Activated T-helper 2 cell treated with anti-CD3 and anti-CD28 coated beads, Interferon-gamma antibody, Interleukin-2, Interleukin-4, amounts not matched to agents 10 μg/mL and 5 μg/mL and 100 μg/mL, durations not matched to agents 14 hours and 24 hours and 36 hours (primary cell): ENCODE measurements at regions of chr4 and their contacts with region 1.

Region 1: GRCh38 chr4:1870578-1871443 is at the start of gene NSD2:
- DNase-seq: peak; percentile 86
- H3K4me3 Mint-ChIP-seq: peak within 1 kb of the TSS; percentile 99
- H3K27ac Mint-ChIP-seq: peak within 1 kb of the TSS; percentile 97
- H3K4me1 Mint-ChIP-seq: peaks cover 29% of the 10 kb centered on the region
- H3K27me3 Mint-ChIP-seq: no peaks in the 10 kb centered on the region
- total RNA-seq, gene NSD2: 208 and 214 TPM in 2 replicates

Region 2: GRCh38 chr4:1721004-1721665 is 149.7 kb before region 1 on chr4 and contains the starts of genes TACC3 and TMEM129:
- intact Hi-C with region 1: loop called (anchors 2 kb)
- DNase-seq: peak; percentile 92
- H3K4me3 Mint-ChIP-seq: peak within 1 kb of the TSS; percentile 97
- H3K27ac Mint-ChIP-seq: peak within 1 kb of the TSS; percentile 99
- H3K4me1 Mint-ChIP-seq: peaks cover 36% of the 10 kb centered on the region
- H3K27me3 Mint-ChIP-seq: no peaks in the 10 kb centered on the region
- total RNA-seq, gene TACC3: 137 and 141 TPM in 2 replicates
- total RNA-seq, gene TMEM129: 23.5 and 27.1 TPM in 2 replicates

Region 3: GRCh38 chr4:1856042-1856788 is 14.6 kb before region 1 on chr4 and contains the start of gene LETM1:
- intact Hi-C with region 1: loop called (anchors 1 kb)
- DNase-seq: peak; percentile 93
- H3K4me3 Mint-ChIP-seq: peak within 1 kb of the TSS; percentile 86
- H3K27ac Mint-ChIP-seq: peak within 1 kb of the TSS; percentile 70
- H3K4me1 Mint-ChIP-seq: peaks cover 32% of the 10 kb centered on the region
- H3K27me3 Mint-ChIP-seq: no peaks in the 10 kb centered on the region
- total RNA-seq, gene LETM1: 76.6 and 78.6 TPM in 2 replicates

Region 4: GRCh38 chr4:1899149-1900086 is 28.6 kb after region 1 on chr4:
- intact Hi-C with region 1: loop called (anchors 1 kb)
- DNase-seq: peak; percentile 65
- H3K4me3 Mint-ChIP-seq: peak overlapping the region; percentile 44
- H3K27ac Mint-ChIP-seq: peak overlapping the region; percentile 89
- H3K4me1 Mint-ChIP-seq: peaks cover 44% of the 10 kb centered on the region
- H3K27me3 Mint-ChIP-seq: no peaks in the 10 kb centered on the region

Region 5: DNA sequence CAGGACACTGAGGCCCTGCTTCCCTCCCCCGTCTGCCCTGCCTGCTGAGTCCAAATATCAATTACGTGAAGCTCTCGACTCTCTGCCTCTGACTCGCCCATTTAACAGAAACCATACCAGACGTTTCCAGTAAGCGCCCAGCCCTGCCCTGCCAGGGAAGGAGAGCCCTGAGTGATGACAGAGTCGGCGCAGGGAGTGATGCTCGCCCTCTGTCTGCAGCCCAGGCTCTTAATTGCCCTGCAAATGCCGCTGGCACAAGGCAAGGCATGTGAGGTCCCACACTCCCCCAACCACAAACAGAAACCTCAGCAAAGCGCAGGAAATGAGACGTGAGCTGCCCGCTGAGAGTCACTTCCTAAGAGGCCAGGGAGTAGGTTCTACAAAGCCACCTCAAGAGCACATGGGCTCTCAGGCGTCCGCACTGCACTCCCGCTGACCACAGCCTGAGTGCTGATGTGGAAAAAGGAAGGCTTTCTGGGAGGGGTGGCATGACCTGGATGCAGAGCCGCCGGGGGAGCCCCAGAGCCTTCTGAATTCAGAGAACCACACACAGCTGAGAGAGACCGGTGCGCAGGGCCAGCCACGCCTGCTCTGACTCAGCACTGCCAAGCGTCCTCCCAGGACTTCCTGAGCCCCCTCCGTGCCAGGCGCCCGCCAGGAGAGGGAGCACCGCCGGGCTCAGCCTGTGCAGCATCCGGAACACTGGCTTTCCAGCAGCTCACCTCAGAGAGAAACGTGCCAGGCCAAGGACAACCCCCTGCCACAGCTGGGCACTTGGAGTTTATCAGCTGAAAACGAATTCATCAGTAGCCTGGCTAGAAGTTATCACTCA is 542.3 kb after region 1 on chr4:
- intact Hi-C with region 1: loop called (anchors 5 kb)
- DNase-seq: peak; percentile 91
- H3K4me3 Mint-ChIP-seq: peak overlapping the region; percentile 74
- H3K27ac Mint-ChIP-seq: peak overlapping the region; percentile 96
- H3K4me1 Mint-ChIP-seq: peaks cover 57% of the 10 kb centered on the region
- H3K27me3 Mint-ChIP-seq: peaks cover 14% of the 10 kb centered on the region